ENCODE measurements at regions of chr15 and their contacts with region 1.

Region 1: GRCh38 chr15:76190834-76191538 is 120.3 kb downstream of the ETFA start:
- DNase-seq: peak; percentile 64
- ATAC-seq: peak; percentile 95
- H3K4me3 Mint-ChIP-seq: peak overlapping the region; percentile 75
- H3K27ac Mint-ChIP-seq: no peak overlapping the region
- H3K4me1 Mint-ChIP-seq: peaks cover 16% of the 10 kb centered on the region
- H3K27me3 Mint-ChIP-seq: peaks cover 31% of the 10 kb centered on the region
- CTCF ChIP-seq: peak; percentile 93

Region 2: GRCh38 chr15:75750261-75751050 is 440.5 kb before region 1 on chr15:
- CTCF ChIA-PET with region 1: no interaction called
- POLR2A ChIA-PET with region 1: no interaction called
- intact Hi-C with region 1: no loop called
- DNase-seq: no peak
- ATAC-seq: no peak
- H3K4me3 Mint-ChIP-seq: no peak overlapping the region
- H3K27ac Mint-ChIP-seq: no peak overlapping the region
- H3K4me1 Mint-ChIP-seq: peaks cover 8% of the 10 kb centered on the region
- H3K27me3 Mint-ChIP-seq: peaks cover 1% of the 10 kb centered on the region
- CTCF ChIP-seq: no peak

Region 3: DNA sequence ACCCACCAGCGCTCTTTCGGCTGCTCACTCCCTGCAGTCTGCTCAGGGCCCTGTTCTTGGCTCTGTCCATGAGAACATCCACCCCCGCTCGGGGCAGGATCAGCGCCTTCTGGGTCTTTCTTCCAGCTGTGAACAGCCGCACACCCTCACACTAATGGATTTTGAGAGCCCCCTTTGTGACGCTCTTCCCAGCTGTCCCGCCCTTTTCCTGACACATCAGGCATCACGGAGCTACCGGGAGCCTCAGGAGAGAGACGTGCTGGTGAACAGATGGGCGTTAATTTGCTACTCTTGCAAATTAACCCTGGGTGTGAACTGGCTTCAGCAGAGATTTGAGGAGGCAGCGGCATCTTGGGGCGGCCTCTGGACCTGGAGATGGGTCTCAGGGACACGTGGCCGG is 18.2 kb before region 1 on chr15:
- CTCF ChIA-PET with region 1: no interaction called
- POLR2A ChIA-PET with region 1: no interaction called
- intact Hi-C with region 1: no loop called
- DNase-seq: no peak
- ATAC-seq: no peak
- H3K4me3 Mint-ChIP-seq: no peak overlapping the region
- H3K27ac Mint-ChIP-seq: no peak overlapping the region
- H3K4me1 Mint-ChIP-seq: no peaks in the 10 kb centered on the region
- H3K27me3 Mint-ChIP-seq: peaks cover 8% of the 10 kb centered on the region
- CTCF ChIP-seq: no peak

Region 4: DNA sequence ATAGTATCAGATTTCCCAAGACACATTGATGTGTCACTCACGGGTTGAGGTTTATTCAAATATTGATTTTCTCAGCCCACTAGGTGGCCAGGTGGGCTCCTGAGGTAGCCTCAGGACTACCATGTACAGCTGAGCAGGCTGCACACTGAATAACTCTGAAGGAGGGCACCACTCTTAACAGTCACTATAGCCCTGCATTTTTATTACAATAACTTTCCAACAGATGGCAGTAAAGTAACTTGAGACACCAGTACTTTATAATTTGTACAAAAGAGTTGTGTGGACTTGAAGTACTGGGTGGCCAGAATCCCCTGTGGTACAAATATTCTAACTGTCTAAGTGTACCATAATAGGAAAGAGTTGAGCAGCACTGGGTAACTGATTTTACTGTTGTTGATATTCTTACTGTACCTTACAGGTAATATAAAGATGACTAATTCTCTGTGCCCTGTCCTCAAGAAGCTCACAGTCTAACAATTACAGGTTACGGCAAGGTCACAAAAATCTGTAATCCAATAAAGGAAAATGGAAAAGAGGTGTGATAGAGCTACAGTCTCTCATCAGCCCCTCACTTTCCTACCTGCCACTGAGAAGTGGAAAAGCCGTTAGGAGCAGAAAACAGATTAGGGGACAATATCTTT is 44.3 kb after region 1 on chr15:
- CTCF ChIA-PET with region 1: interaction called, 4 read pairs
- POLR2A ChIA-PET with region 1: no interaction called
- intact Hi-C with region 1: loop called (anchors 2 kb)
- DNase-seq: no peak
- ATAC-seq: peak; percentile 52
- H3K4me3 Mint-ChIP-seq: no peak overlapping the region
- H3K27ac Mint-ChIP-seq: no peak overlapping the region
- H3K4me1 Mint-ChIP-seq: no peaks in the 10 kb centered on the region
- H3K27me3 Mint-ChIP-seq: no peaks in the 10 kb centered on the region
- CTCF ChIP-seq: no peak

Region 5: DNA sequence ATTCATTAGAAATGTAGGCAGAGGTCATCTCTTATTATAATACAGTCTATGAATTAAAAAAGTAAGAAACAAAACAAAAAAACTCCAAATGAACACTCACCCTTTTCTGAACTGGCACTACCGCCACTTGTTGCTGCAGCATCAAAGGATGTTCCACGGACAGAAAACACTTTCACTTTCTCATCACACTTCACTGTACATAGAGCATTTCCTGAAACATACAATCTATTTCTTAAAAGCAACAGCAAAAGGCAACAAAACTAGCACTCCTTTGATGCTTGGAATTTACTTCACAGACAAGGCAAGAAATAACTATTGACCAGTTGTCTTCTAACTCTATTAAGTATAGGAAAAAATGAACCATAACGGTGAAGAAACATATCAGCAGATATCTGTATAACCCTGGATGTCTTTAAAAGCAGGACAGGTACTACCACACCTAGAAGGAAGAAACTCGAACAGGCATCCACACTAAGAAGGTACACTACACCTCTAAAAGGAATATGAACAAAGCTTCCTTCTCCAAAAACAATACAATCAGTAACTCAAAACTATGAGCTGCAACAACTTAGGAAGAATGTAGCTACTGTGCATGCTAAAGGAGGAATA is 95.4 kb after region 1 on chr15:
- CTCF ChIA-PET with region 1: no interaction called
- POLR2A ChIA-PET with region 1: no interaction called
- intact Hi-C with region 1: loop called (anchors 2 kb)
- DNase-seq: no peak
- ATAC-seq: peak; percentile 49
- H3K4me3 Mint-ChIP-seq: peak overlapping the region; percentile 47
- H3K27ac Mint-ChIP-seq: peak overlapping the region; percentile 18
- H3K4me1 Mint-ChIP-seq: peaks cover 9% of the 10 kb centered on the region
- H3K27me3 Mint-ChIP-seq: no peaks in the 10 kb centered on the region
- CTCF ChIP-seq: no peak

Region 6: DNA sequence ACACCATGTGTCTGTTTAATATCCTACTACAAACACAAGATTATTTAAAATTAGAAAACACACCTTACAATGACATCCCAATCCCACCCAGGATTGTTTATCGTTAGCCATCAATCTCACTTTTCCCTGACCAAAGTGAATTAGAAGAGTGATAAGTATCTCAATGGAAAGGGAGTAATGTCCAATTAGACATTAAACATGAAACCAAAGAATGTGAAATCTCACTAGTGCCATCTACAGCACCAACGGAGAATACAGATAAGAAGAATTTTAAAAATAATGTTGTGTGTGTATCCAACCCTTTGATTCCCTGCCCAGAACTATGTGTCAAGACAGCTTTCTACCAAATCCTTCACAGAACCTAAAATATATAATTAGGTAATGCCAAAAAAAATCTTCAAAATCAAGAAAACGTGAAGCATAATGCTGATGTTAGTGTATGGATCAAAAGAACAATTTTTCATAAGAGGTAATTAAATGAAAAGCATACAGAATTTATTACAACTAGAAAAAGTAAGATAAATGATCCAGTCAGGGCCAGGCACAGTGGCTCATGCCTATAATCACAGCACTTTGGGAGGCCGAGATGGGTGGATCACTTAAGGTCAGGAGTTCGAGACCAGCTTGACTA is 650.0 kb after region 1 on chr15:
- CTCF ChIA-PET with region 1: interaction called, 3 read pairs
- POLR2A ChIA-PET with region 1: no interaction called
- intact Hi-C with region 1: loop called (anchors 2 kb)
- DNase-seq: no peak
- ATAC-seq: no peak
- H3K4me3 Mint-ChIP-seq: no peak overlapping the region
- H3K27ac Mint-ChIP-seq: no peak overlapping the region
- H3K4me1 Mint-ChIP-seq: peaks cover 30% of the 10 kb centered on the region
- H3K27me3 Mint-ChIP-seq: no peaks in the 10 kb centered on the region
- CTCF ChIP-seq: no peak

Region 7: DNA sequence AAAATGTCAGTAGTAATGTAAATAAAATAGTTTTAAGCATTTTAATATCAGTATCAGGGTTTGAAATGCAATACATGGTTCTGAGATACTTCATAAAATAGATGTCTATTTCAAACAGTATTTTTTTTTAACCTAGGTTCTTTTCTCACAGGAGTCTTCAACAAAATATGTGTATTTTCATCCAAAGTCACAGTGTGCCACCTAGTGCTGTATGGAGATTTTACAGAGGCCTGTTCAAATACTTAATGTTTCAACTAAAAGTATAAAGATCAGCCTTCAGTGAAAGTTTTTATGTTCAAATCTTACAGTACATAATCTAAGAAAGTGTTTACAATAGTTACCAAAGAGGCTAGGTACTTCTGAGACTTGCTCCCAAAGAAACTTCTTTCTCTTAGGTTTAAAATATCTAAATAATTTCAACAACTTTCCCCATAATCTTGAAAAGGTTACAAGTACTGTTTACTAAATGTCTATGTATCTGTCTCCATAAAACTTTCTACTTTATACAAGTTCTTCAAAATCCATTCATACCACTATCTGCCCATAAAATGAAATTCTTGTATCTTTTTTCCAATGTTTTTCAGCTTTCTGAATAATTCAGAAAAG is 675.8 kb after region 1 on chr15:
- CTCF ChIA-PET with region 1: interaction called, 6 read pairs
- POLR2A ChIA-PET with region 1: no interaction called
- intact Hi-C with region 1: loop called (anchors 2 kb)
- DNase-seq: no peak
- ATAC-seq: no peak
- H3K4me3 Mint-ChIP-seq: no peak overlapping the region
- H3K27ac Mint-ChIP-seq: no peak overlapping the region
- H3K4me1 Mint-ChIP-seq: peaks cover 16% of the 10 kb centered on the region
- H3K27me3 Mint-ChIP-seq: no peaks in the 10 kb centered on the region
- CTCF ChIP-seq: no peak

Region 8: DNA sequence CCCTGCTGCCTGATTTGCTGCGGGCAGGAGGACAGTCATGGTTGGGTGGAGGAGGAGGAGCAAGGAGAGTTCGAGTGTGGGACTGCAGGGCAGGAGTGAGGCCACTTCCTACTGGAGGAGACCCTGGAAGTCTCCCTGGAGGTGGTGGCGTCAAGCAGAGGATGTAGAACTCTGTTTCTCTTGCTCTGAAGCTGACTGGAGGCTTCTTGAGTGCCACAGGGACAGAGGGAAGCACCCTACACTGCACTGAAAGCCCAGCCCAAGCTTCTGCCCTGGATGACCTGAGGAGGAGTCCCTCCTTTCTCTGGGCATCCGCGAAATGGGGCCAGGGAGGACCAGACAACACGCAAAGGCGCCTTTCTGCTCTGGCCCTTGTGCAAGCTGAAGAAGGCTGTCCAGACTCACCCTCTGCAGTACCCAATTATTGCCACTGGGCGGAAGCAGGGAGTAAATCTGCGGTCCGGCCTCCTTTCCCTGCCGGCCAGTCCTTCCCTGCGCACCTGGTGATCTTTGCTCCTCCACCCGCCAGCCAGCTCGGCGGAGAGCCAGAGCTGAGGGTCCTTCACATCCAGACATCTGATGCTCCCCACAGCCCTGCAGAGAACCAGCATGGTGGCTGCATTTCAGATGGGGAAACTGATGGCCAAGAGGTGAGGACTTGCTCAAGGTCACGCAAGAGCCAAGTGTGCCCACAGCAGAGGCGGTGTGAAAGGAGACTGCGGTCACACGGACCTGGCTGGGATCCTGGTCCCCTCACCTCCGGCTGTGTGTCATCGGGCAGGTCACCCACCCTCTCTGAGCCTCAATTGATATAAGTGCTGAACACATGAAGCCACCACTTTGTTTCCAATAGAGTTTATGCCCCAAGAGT is 1679.4 kb after region 1 on chr15:
- CTCF ChIA-PET with region 1: no interaction called
- POLR2A ChIA-PET with region 1: no interaction called
- intact Hi-C with region 1: loop called (anchors 10 kb)
- DNase-seq: peak; percentile 31
- ATAC-seq: peak; percentile 69
- H3K4me3 Mint-ChIP-seq: no peak overlapping the region
- H3K27ac Mint-ChIP-seq: no peak overlapping the region
- H3K4me1 Mint-ChIP-seq: no peaks in the 10 kb centered on the region
- H3K27me3 Mint-ChIP-seq: peaks cover 3% of the 10 kb centered on the region
- CTCF ChIP-seq: peak; percentile 45